Posterior vena cava (tissue), 2 donors: ENCODE measurements at regions of chr14 and their contacts with region 1.

Region 1: GRCh38 chr14:47186491-47186890 is 488.9 kb downstream of the MDGA2 start:
- DNase-seq: no peak

Region 2: GRCh38 chr14:46717211-46717610 is 469.3 kb before region 1 on chr14:
- intact Hi-C with region 1: loop called in 1 of 2 experiments (anchors 5 kb)
- DNase-seq: no peak